ENCODE measurements at regions of chr19 and their contacts with region 1.

Region 1: DNA sequence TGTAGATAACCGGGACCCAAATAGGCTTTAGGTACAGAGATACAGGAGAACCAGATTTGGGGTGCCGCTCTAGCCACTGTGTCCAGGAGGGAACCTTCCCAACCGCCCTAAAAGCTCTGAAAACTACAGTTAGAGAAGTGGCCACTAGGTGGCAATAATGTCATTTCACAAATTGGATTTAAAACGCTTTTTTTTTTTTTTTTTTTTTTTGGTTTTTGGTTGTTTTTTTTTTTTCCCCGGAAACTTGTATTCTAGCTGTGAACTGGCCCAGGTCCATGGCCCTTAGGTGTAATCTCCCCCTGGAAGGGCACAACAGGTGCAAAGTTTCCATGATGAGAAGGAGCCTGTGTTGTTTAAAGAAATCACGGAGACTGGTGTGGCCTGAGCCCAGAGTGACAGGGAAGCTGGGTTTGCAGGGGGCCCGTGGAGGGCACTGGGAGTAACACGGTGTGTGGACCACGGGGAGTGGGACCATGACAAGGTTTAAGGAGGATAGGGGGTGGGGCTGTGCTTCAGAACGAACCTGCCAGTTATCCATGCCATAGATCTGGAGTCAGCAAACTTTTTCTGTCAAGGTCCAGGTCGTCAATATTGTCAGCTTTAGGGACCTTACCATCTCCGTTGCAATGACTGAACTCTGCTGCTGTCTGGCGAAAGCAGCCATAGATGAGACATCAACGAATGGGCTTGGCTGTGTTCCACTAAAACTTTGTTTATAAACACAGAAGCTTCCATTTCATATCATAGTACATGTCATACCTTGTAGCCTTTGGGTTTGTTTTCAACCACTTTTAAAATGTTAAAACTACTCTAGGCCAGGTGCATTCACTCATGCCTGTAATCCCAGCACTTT is 10.1 kb downstream of the OR1I1 start:
- DNase-seq: no peak
- H3K4me3 ChIP-seq: no peak overlapping the region
- CTCF ChIP-seq: peak; percentile 47

Region 2: DNA sequence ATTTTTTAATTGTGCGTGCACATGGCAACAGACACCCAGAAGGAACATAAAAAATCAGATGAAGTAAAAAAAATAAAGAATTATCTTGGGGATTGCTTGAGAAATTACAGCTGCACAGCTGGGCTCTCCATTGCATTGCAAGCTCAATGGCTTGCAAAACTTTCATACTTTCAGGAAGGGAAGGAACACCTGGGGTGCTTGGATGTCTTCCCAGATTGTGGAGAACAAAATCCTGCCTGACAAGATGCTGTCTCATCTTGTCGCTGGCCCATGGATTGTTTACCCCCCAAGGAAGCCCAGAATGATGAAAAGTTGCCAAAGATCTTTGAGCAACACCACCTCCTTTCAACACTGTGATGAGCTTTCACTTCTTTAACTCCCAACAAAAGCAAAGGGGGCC is 53.8 kb before region 1 on chr19:
- CTCF ChIA-PET with region 1: no interaction called
- POLR2A ChIA-PET with region 1: no interaction called
- DNase-seq: no peak
- H3K4me3 ChIP-seq: no peak overlapping the region
- CTCF ChIP-seq: no peak

Region 3: DNA sequence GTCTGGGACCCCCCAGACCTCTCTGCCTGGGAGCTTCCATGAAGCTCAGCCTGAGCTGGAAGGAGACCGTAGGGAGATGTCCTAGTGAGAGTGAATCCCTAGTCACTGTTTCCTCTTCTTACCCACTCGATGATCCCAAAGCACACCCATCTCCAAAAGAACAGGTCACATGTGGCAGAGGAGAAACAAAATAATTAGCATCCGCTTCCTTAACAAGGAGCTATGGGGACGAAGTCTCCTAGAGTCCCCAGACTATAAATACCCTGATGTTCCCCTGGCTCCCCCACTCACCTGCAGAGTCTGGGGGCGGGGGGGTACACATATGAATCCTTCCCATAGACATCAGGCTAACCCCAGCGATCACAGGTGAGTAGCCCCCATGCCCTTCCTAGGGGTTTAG is 10.2 kb before region 1 on chr19 and contains the start of gene OR1I1:
- CTCF ChIA-PET with region 1: interaction called, 11 read pairs
- POLR2A ChIA-PET with region 1: no interaction called
- DNase-seq: no peak
- H3K4me3 ChIP-seq: no peak within 1 kb of the TSS
- CTCF ChIP-seq: no peak

Region 4: DNA sequence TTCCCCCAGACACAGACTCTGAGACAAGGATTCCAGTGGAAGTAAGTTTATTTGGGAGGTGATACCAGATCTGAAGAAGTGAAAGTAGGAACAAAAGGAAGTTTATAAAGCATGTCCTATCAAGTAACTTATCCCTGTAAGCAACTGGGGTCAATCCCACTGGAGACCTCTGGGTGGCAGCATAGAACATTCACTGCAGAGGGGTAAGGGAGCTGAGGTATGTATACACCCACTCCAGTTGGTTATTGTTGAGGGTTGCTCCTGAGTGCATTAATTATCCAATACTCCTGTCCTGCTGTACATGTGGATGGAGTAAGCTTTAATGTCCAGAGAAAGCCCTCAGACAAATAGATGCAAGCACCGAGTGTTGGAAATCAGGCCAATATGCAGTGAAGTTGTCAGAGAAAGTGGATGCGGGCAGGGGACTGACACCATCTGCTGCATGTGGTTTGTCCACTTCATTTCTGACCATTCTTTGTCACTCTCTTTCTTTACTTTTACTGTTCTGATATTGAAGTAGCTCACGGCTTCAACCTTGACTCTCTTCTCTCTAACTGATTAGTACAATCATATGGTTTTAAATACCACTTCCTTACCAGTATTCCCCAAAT is 62.0 kb after region 1 on chr19:
- CTCF ChIA-PET with region 1: interaction called, 99 read pairs
- POLR2A ChIA-PET with region 1: no interaction called
- DNase-seq: no peak
- H3K4me3 ChIP-seq: no peak overlapping the region
- CTCF ChIP-seq: peak; percentile 57

Region 5: DNA sequence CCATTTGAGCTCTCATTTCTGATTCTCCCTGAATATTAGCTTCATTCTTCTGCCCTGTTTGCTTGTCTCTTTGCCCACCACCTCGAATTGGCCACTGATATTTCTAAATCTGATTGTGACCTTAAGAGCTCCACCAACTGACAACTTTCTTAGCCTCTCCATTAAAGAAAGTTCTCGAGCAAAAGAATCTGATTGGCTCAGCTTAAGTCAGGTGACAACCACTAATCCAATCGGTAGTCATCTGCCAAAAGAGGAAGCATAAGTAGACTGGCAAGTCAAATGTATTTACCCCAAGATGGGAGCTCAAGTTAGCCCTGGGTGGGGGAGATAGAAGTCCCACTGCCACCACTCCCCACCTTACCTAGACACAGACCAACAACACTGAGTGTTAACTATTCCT is 67.1 kb after region 1 on chr19:
- CTCF ChIA-PET with region 1: interaction called, 99 read pairs
- POLR2A ChIA-PET with region 1: no interaction called
- DNase-seq: no peak
- H3K4me3 ChIP-seq: no peak overlapping the region
- CTCF ChIP-seq: no peak

Region 6: DNA sequence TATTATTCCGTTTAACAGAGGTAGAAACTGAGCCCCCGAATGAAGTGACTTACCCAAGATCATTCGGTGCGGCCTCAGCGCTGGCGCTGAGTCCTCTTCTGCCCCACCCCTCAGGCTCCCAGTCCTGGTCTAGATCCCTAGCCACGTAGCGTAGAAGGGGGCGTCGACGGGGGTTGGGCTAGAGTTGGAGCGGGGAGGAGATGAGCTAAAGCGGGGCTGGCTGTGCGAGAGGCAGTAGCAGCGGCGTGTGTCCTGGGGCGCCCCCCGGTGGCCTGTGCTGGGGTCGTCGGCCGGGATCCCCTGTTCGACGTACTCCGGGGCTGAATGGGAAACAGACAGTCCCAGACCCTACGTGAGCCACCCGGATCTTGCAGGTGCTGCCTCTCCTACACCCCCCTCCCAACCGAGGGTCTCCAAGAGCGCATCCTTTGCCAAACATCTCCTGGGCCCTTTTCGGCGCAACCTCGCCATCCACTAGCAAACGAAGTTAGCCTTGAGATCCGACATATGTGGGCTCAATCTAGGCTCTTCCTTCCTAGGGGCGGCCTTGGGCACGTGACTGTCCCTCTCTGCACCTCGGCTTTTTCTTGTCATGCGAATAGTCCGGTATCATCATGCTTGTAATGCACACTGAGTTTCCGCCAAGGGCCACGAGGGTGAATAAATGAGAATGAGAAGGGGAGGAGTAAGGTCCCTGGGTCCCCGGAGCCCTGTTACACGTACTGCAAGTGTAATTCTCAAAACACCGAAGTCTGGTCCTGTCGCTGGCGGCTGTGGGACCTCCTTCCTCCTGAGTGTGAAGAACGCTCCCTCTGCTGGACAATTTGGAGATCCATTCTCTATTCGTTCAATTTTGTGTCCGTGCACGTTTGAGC is 463.9 kb after region 1 on chr19:
- CTCF ChIA-PET with region 1: interaction called, 58 read pairs
- POLR2A ChIA-PET with region 1: interaction called, 4 read pairs
- DNase-seq: peak; percentile 59
- H3K4me3 ChIP-seq: peak overlapping the region; percentile 43
- CTCF ChIP-seq: peak; percentile 91